ENCODE measurements at regions of chr21 and their contacts with region 1.

Region 1: DNA sequence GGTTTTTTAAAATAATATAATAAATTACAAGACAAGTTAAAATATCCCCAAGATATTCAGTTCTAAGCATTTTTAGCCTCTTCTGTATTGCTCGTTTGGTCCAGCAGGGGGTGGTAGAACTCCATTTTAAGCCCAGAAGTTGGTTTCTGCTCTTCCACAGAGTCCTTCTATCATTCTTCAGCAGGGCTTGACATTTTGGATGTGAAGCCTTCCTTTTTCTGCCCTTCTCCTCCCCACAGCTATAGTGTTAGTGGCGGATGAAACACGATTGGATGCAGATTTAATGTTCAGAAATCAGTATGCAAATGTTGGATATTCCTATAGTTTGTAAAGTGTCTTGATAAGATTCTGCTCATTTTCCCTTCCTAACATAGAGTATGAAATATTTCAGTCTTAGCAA is 1.4 kb downstream of the NCAM2 start:
- ATAC-seq: peak in 4 of 8 experiments; percentile 18 to 51 (median 36)
- H3K4me3 ChIP-seq: peak overlapping the region; percentile 42 to 74 (median 54)
- H3K27ac ChIP-seq: no peak overlapping the region
- H3K4me1 ChIP-seq: peaks cover 0 to 6% of the 10 kb centered on the region in 2 donors

Region 2: DNA sequence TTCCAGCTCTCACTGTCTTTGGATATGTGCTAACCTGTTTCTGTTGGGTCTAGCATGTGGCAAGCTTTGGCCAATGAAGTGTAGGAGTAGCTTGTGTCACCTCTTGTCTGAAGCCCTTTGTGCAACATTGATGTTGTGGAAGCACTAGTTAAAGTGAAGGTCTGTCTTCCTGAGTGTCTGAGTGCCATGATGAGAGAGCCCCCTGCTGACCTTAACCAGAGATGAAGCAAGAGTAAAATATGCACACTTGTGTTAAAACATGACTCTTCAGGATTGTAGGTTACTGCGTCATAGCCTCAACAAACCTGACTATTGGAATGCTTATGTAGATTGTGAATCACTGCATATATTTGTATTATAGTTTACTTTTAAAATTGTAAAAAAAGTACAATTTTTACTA is 102.3 kb after region 1 on chr21:
- in situ Hi-C with region 1: loop called in 1 of 9 experiments (anchors 25 kb)
- ATAC-seq: peak in 4 of 8 experiments; percentile 36 to 84 (median 72)
- H3K4me3 ChIP-seq: no peak overlapping the region
- H3K27ac ChIP-seq: no peak overlapping the region
- H3K4me1 ChIP-seq: no peaks in the 10 kb centered on the region

Region 3: GRCh38 chr21:21188513-21189195 is 189.0 kb after region 1 on chr21:
- in situ Hi-C with region 1: no loop called
- ATAC-seq: peak in 2 of 8 experiments; percentile 42 to 58
- H3K4me3 ChIP-seq: no peak overlapping the region
- H3K27ac ChIP-seq: no peak overlapping the region
- H3K4me1 ChIP-seq: peaks cover 2 to 19% of the 10 kb centered on the region in 2 donors

Region 4: GRCh38 chr21:22791986-22792560 is 1792.4 kb after region 1 on chr21:
- in situ Hi-C with region 1: loop called in 2 of 9 experiments (anchors 25 kb)
- ATAC-seq: peak in 1 of 8 experiments; percentile 35
- H3K4me3 ChIP-seq: no peak overlapping the region
- H3K27ac ChIP-seq: no peak overlapping the region
- H3K4me1 ChIP-seq: no peaks in the 10 kb centered on the region